B cell (primary cell): ENCODE measurements at regions of chr5 and their contacts with region 1.

Region 1: DNA sequence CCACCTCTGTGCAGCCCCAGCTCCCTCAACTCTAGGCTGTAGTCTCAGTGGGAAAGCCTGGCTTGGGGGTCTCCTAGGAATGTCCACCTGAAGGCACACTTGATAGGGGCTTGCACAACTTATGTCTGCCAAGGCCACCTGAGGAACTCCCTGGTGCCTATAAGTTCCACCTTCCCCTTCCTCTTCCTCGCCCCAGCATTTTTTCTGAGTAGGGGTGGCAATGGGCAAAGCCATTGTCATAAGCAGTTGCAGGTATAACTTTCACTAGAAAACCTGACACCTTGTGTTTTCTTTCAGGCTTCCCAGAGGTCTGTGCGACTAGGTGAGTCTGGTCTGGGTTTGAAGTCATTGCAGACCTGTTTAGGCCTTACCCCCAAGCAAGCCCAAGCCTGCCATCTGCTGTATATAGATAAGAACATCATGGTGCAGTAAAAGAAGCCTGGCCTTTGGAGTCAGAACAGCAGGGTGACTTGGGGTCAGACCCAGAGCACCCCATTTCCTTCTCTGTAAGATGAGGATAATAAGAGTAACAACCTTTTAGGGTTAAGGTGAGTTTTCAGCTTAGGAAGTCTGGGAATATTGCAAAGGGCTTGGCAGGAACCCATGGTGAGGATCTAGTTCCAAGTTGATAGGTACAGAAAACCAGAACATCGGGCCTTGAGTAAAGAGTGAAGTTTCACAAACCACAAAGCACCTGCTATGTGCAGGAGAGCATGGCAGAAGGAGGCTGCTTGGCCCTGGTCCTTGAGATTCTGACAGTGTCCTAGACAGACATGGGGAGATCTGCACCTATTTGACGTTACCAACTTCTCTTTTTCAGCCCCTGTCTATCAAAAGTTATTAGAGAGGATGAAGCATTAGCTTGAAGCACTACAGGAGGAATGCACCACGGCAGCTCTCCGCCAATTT is 33.8 kb downstream of the TGFBI start:
- DNase-seq: peak; percentile 10
- ATAC-seq: no peak
- H3K4me3 ChIP-seq: no peak overlapping the region
- H3K4me3 Mint-ChIP-seq: no peak overlapping the region
- H3K27ac ChIP-seq: no peak overlapping the region
- H3K27ac Mint-ChIP-seq: no peak overlapping the region
- H3K4me1 ChIP-seq: no peaks in the 10 kb centered on the region
- H3K4me1 Mint-ChIP-seq: no peaks in the 10 kb centered on the region
- H3K27me3 ChIP-seq: no peaks in the 10 kb centered on the region
- H3K27me3 Mint-ChIP-seq: no peaks in the 10 kb centered on the region
- CTCF ChIP-seq: no peak

Region 2: GRCh38 chr5:135887351-135887864 is 175.2 kb before region 1 on chr5:
- CTCF ChIA-PET with region 1: no interaction called
- POLR2A ChIA-PET with region 1: no interaction called
- intact Hi-C with region 1: loop called (anchors 5 kb)
- DNase-seq: peak; percentile 67
- ATAC-seq: peak; percentile 75
- H3K4me3 ChIP-seq: no peak overlapping the region
- H3K4me3 Mint-ChIP-seq: peak overlapping the region; percentile 66
- H3K27ac ChIP-seq: no peak overlapping the region
- H3K27ac Mint-ChIP-seq: no peak overlapping the region
- H3K4me1 ChIP-seq: peaks cover 0 to 5% of the 10 kb centered on the region in 2 donors
- H3K4me1 Mint-ChIP-seq: peaks cover 5% of the 10 kb centered on the region
- H3K27me3 ChIP-seq: no peaks in the 10 kb centered on the region
- H3K27me3 Mint-ChIP-seq: peaks cover 13% of the 10 kb centered on the region
- CTCF ChIP-seq: peak; percentile 81

Region 3: GRCh38 chr5:135944967-135945560 is 117.6 kb before region 1 on chr5:
- CTCF ChIA-PET with region 1: no interaction called
- POLR2A ChIA-PET with region 1: no interaction called
- intact Hi-C with region 1: loop called (anchors 10 kb)
- DNase-seq: peak; percentile 43
- ATAC-seq: no peak
- H3K4me3 ChIP-seq: no peak overlapping the region
- H3K4me3 Mint-ChIP-seq: no peak overlapping the region
- H3K27ac ChIP-seq: no peak overlapping the region
- H3K27ac Mint-ChIP-seq: no peak overlapping the region
- H3K4me1 ChIP-seq: no peaks in the 10 kb centered on the region
- H3K4me1 Mint-ChIP-seq: no peaks in the 10 kb centered on the region
- H3K27me3 ChIP-seq: peaks cover 0 to 4% (median 0%) of the 10 kb centered on the region in 4 experiments
- H3K27me3 Mint-ChIP-seq: peaks cover 11% of the 10 kb centered on the region
- CTCF ChIP-seq: peak; percentile 76

Region 4: DNA sequence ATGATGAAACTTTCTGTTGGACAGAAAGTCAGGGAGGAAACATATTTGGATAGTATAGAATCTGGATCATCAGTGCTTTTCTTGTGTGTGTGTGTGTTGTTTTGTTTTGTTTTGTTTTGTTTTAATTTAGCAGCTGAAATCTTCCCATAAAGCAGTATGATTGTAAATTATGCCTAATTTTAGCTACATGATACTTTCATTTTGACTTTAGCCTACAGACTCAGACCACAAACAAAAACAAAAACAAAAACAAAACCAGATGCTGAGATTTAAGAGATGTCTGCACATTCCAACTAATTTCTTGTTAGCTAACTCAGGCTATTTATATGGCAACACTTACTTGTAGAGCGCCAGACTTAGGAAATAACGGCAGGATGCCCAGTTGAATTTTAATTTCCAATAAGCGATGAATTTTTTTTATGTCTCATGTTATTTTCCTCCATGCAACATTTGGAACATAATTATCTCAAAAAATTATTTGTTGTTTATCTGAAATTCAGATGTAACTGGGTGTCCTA is 422.2 kb after region 1 on chr5:
- CTCF ChIA-PET with region 1: no interaction called
- POLR2A ChIA-PET with region 1: no interaction called
- intact Hi-C with region 1: no loop called
- DNase-seq: no peak
- ATAC-seq: no peak
- H3K4me3 ChIP-seq: no peak overlapping the region
- H3K4me3 Mint-ChIP-seq: no peak overlapping the region
- H3K27ac ChIP-seq: no peak overlapping the region
- H3K27ac Mint-ChIP-seq: no peak overlapping the region
- H3K4me1 ChIP-seq: no peaks in the 10 kb centered on the region
- H3K4me1 Mint-ChIP-seq: no peaks in the 10 kb centered on the region
- H3K27me3 ChIP-seq: no peaks in the 10 kb centered on the region
- H3K27me3 Mint-ChIP-seq: no peaks in the 10 kb centered on the region
- CTCF ChIP-seq: no peak